ENCODE measurements at regions of chr1 and their contacts with region 1.

Region 1: DNA sequence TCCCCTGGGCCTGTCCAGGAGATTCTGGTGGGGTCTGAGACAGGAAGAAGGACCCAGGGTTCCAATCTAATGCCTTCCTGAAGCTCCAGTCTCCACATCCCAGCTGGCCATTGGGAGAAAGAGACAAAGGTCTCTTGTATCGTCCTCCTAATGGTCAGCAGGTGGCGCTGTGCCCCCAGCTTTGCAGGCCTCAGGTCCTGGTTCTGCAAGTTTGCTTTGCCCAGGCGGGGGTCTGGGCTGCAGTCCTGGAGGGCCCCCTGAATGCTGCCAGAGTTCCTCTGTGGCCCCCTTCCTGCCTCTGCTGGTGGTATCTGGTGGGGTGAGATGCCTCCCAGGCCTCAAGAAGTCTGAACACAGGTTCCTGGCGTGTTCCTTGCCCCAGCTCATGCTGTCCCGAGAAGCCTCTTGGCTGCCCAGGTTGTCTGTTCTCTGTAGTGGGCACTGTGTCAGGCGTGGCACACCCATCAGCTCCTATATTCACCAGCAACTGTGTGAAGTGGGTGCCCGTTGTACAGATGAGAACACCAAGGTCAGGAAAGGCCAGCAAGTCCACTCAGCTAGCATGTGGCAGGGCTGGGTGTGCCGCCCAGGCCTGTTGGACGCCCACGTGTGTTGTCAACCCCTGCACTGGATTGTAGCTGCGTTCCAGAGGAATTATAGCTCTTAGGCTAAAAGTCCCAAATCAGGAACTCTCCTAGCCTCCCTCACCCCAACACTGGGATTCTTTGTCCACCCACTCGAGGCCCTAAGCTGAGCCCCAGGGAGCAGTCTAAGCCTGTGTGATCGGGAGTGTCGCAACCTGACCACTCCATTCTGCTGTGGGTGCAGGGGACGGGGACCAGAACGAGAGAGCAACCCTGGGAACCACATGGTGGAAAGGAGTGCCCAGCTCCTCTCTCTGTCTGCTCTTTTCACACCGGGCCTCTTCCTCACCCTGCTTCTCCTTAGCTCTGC is 33.9 kb upstream of the CSF3R start:
- DNase-seq: peak; percentile 59
- ATAC-seq: peak; percentile 90
- H3K4me3 ChIP-seq: no peak overlapping the region
- H3K27ac ChIP-seq: no peak overlapping the region
- H3K4me1 ChIP-seq: no peaks in the 10 kb centered on the region
- H3K27me3 ChIP-seq: no peaks in the 10 kb centered on the region
- CTCF ChIP-seq: peak; percentile 94

Region 2: DNA sequence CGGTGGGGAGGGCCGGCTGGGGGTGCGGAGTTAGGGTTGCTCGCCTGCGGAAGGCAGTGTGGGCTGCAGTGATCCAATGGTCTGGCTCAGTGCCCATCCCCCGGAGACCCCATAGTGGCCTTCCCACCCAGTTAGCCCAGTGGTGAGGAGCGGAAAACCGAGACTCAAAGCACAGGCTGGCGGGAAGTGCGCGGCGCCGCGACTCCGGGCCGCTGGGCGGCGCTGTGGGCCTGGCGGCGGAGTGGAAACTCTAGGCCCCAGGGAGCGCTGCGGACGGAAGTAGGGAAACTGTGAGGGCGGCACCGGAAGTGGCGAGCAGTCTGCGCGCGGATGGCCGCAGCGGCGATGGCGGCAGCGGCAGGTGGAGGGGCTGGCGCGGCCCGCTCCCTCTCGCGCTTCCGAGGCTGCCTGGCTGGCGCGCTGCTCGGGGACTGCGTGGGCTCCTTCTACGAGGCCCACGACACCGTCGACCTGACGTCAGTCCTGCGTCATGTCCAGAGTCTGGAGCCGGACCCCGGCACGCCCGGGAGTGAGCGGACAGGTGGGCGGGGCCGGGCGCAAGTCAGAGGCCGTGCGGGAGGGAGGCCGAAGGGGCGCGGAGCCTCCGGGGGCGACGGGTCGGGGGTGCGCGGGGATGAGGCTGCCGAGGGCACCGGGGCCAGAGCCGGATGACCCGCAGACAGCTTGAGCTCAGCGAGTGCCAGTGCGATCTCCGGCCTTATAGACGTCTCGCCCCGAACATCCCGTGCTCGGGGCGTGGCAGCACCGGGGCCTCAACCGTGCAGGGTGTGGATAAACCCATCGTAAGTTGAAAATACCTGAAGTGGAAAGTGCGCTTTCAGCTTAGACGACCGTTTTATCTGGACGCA is 427.8 kb before region 1 on chr1 and contains the start of gene ADPRS:
- CTCF ChIA-PET with region 1: no interaction called
- POLR2A ChIA-PET with region 1: no interaction called
- intact Hi-C with region 1: no loop called
- DNase-seq: peak; percentile 88
- ATAC-seq: peak; percentile 91
- H3K4me3 ChIP-seq: peak within 1 kb of the TSS; percentile 99
- H3K27ac ChIP-seq: peak within 1 kb of the TSS; percentile 50
- H3K4me1 ChIP-seq: peaks cover 13% of the 10 kb centered on the region; the same call in 1 of the 2 replicates
- H3K27me3 ChIP-seq: no peaks in the 10 kb centered on the region
- CTCF ChIP-seq: peak; percentile 95
- total RNA-seq, gene ADPRS: 75.9 and 83.0 TPM in 2 replicates

Region 3: GRCh38 chr1:36269408-36269838 is 247.2 kb before region 1 on chr1:
- CTCF ChIA-PET with region 1: no interaction called
- POLR2A ChIA-PET with region 1: no interaction called
- intact Hi-C with region 1: no loop called
- DNase-seq: no peak
- ATAC-seq: peak; percentile 56
- H3K4me3 ChIP-seq: no peak overlapping the region
- H3K27ac ChIP-seq: no peak overlapping the region
- H3K4me1 ChIP-seq: no peaks in the 10 kb centered on the region
- H3K27me3 ChIP-seq: no peaks in the 10 kb centered on the region
- CTCF ChIP-seq: no peak

Region 4: GRCh38 chr1:36743286-36744007 is 226.8 kb after region 1 on chr1:
- CTCF ChIA-PET with region 1: no interaction called
- POLR2A ChIA-PET with region 1: no interaction called
- intact Hi-C with region 1: no loop called
- DNase-seq: no peak
- ATAC-seq: no peak
- H3K4me3 ChIP-seq: no peak overlapping the region
- H3K27ac ChIP-seq: no peak overlapping the region
- H3K4me1 ChIP-seq: no peaks in the 10 kb centered on the region
- H3K27me3 ChIP-seq: peaks cover 59% of the 10 kb centered on the region
- CTCF ChIP-seq: no peak

Region 5: DNA sequence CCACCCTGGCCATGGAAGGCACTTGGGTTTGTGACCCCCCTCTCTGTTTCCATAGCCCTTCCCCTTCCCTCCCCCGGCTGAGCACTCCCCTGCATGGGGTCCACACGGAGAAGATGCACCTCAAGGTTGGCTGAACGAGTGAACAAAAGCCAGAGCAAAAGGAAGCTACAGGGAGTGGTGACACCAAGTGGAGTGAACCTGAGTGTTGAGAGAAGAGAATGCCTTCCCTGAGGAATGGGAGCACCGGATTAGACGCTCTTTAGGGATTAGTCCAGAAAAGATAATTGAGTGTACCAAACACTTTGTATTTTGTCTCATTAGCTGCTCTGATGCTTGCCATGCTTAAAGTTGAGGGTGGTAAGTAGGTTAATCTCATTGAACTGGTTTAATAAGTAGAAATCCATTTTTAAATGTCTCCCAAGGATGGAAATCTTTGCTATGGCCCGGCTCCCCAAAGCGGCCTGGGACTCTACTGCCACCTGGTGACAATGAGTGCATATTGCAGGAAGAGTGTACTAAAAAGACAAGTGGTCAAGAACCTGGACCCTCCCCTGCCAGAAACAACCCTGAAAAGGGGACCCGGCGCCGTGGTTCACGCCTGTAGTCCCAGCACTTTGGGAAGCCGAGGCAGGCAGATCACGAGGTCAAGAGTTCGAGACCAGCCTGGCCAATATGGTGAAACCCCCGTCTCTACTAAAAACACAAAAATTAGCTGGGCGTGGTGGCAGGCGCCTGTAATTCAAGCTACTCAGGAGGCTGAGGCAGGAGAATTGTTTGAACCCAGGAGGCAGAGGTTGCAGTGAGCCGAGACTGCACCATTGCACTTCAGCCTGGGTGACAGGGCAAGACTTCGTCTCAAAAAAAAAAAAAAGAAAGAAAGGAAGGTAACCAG is 807.1 kb after region 1 on chr1:
- CTCF ChIA-PET with region 1: no interaction called
- POLR2A ChIA-PET with region 1: no interaction called
- intact Hi-C with region 1: loop called (anchors 5 kb)
- DNase-seq: peak; percentile 67
- ATAC-seq: peak; percentile 40; the same call in 1 of the 2 replicates
- H3K4me3 ChIP-seq: no peak overlapping the region
- H3K27ac ChIP-seq: no peak overlapping the region
- H3K4me1 ChIP-seq: no peaks in the 10 kb centered on the region
- H3K27me3 ChIP-seq: peaks cover 52% of the 10 kb centered on the region
- CTCF ChIP-seq: peak; percentile 82

Region 6: GRCh38 chr1:37434292-37434907 is 917.8 kb after region 1 on chr1:
- CTCF ChIA-PET with region 1: no interaction called
- POLR2A ChIA-PET with region 1: no interaction called
- intact Hi-C with region 1: loop called (anchors 2 kb)
- DNase-seq: peak; percentile 68
- ATAC-seq: peak; percentile 90
- H3K4me3 ChIP-seq: no peak overlapping the region
- H3K27ac ChIP-seq: no peak overlapping the region
- H3K4me1 ChIP-seq: no peaks in the 10 kb centered on the region
- H3K27me3 ChIP-seq: peaks cover 7% of the 10 kb centered on the region; the same call in 1 of the 2 replicates
- CTCF ChIP-seq: peak; percentile 96

Measured in PC-3 (cell line).